Activated CD4-positive, alpha-beta memory T cell treated with anti-CD3 and anti-CD28 coated beads, Interleukin-2, amount 10 ng/mL, durations not matched to agents 7 days and 5 days (primary cell): ENCODE measurements at regions of chr7 and their contacts with region 1.

Region 1: DNA sequence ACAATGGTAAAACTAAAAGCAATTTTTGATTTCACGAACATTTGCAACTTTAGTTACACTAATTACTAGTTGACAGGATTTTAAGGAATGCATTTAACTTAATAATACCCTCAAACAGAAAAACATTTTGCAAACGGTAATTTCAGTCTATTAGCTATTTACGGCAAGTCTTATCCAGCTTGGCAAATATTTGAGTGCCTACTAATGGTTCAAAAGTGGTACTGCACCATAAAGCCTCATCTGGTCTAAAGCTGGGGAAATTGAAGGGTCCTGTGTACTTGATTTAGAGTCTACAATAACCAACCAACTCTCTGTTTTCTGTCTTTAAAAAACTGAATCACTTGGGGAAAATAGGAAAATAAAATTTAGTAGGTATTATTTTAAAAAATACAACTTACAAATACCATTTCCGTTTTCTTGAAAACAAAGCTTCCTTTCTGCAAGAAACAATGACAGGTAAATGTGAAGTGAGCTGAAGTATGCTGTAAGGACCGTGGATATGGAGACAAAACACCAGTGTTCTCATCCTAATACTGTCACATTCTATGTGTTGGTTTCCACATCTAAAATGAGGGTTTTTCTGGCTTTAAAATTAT is 142.3 kb downstream of the VPS50 start:
- DNase-seq: no peak
- H3K4me3 Mint-ChIP-seq: no peak overlapping the region
- H3K27ac Mint-ChIP-seq: no peak overlapping the region
- H3K4me1 Mint-ChIP-seq: no peaks in the 10 kb centered on the region
- H3K27me3 Mint-ChIP-seq: peaks cover 21% of the 10 kb centered on the region

Region 2: DNA sequence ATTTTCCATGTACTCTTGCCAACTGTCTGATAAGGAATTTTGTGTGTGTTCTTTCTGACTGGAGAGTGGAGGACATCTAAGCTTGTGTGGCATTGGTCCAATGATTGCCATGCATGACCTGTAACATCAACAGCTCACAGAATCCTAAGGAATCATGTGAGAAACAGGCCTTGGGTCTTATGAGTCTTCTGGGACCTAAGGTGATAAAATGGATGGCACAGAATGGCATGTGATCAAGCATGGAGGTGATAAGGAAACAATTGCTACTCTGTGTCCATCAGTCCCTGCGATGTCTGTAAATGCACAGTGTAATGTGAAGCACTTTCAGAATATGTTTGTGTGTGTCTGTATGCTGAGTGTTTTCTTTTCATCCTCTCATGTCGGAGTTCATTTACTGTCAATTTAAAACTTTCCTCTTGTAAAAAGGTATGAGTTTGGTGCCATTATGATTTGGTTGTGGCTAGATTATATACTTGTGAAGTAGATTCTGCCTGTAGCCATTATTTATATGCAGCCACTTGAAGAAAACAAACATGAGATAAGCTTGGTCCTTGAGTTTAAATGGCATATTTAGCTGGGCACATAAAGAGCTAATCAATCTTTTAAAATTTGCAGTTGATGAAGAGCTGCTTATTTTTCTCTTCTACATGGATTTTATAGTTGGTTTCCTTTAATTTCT is 14.8 kb before region 1 on chr7:
- CTCF ChIA-PET with region 1: interaction called, 11 read pairs
- POLR2A ChIA-PET with region 1: no interaction called
- DNase-seq: no peak
- H3K4me3 Mint-ChIP-seq: no peak overlapping the region
- H3K27ac Mint-ChIP-seq: no peak overlapping the region
- H3K4me1 Mint-ChIP-seq: no peaks in the 10 kb centered on the region
- H3K27me3 Mint-ChIP-seq: no peaks in the 10 kb centered on the region

Region 3: DNA sequence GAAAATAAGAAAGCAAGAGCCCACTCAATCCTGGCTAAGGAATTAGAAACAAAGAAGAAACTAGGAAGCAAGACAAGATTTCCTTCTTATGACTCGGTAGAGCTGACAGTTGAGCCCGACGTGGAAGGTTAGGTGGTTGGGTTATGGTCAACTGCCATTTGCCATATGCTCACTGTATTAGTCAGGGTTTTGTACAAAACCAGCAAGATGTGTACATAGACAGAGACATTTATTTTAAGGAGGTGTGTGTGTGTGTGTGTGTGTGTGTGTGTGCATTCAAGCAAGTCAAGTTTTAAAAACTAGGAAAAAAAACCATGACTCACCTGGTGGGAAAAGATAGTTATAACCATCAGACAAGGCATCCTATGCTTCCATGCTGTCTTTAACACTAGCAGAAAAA is 16.2 kb after region 1 on chr7:
- CTCF ChIA-PET with region 1: no interaction called
- POLR2A ChIA-PET with region 1: no interaction called
- DNase-seq: no peak
- H3K4me3 Mint-ChIP-seq: no peak overlapping the region
- H3K27ac Mint-ChIP-seq: no peak overlapping the region
- H3K4me1 Mint-ChIP-seq: no peaks in the 10 kb centered on the region
- H3K27me3 Mint-ChIP-seq: peaks cover 18% of the 10 kb centered on the region